GM12878 (cell line): ENCODE measurements at regions of chr9 and their contacts with region 1.

Region 1: DNA sequence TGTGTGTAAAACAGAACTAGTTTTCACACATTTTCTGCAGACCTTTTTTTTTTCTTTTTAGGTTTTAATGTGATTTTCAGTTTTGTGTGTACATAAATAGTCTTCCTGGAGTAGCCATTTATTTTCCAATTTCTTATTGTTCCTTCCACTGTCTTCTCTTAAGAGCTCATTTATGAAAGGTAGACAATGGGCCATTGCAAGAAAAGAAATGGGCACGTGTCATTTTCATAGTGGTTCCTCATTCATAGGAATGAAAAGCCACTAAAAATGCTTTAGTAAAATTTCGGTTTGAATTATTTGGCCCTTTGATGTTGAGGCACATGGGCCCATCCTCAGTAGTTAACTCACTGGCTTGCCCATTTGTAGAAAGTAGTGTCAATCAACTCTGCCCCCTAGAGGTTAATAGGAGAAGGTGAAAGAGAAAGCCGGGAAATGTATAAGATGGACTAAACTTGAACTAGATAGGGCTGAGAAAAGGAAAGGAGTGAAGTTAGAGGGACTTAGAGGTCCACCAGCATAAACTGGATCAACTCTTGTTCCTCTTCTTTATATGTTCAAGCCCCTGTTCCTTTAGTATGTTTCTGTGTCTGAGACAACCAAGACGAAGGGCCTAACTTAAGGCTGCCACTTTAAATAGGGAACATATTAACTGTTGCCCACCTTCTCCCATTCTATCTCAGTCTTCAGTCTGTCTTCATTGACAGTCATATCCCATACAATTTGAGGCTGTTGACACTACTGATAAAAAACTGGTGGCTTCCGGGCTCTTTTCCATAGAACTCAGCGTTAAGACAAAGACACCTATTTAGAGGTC is 72.6 kb downstream of the SMARCA2 start:
- DNase-seq: peak; percentile 45
- ATAC-seq: peak; percentile 91
- H3K4me3 ChIP-seq: no peak overlapping the region
- H3K27ac ChIP-seq: peak overlapping the region; percentile 38
- H3K4me1 ChIP-seq: peaks cover 4% of the 10 kb centered on the region; the same call in 1 of the 2 replicates
- H3K27me3 ChIP-seq: no peaks in the 10 kb centered on the region
- CTCF ChIP-seq: peak; percentile 60 to 68 (median 65)
- EP300 ChIP-seq: no peak
- POLR2A ChIP-seq: no peak
- RAD21 ChIP-seq: peak; percentile 68

Region 2: DNA sequence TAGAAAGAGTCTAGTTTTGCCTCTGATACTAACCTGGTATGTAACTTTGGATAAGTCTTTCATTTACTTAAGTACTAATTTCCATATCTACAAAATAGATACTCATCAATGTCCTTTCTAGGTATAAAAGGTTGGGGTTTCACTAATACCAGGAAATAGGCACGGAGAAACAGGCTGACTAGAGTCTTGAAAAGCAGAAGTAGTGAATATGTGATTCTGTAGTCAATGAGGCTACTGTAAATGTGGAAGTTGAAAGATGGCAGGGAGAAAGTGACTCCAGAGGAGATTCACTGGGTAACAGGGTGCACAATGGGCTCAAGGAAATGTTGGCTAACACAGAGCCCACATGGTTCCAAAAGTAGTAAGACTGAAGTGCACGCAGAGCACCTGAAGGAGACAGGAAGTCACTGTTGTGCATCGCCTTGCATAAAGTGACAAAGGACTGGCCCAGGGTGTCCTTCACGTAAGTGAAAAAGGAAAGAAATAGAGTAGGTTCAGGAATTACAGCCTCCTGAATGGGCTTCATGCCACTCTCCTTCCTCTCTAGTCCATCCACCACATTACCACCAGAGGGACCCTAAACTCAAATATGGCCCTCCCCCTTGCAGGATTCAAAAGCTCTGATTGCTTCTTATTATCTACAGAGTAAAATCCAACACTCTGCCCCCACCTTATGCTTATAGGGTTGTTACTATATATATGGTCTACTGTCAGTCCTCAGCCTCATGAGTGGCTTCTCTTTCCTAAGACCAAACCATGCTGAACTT is 360.5 kb before region 1 on chr9:
- CTCF ChIA-PET with region 1: interaction called, 3 read pairs
- POLR2A ChIA-PET with region 1: no interaction called
- RAD21 ChIA-PET with region 1: interaction called, 5 read pairs
- SMC1A ChIA-PET with region 1: no interaction called
- in situ Hi-C with region 1: no loop called
- intact Hi-C with region 1: loop called (anchors 5 kb)
- DNase-seq: no peak
- ATAC-seq: peak; percentile 87
- H3K4me3 ChIP-seq: no peak overlapping the region
- H3K27ac ChIP-seq: no peak overlapping the region
- H3K4me1 ChIP-seq: peaks cover 6% of the 10 kb centered on the region; the same call in 1 of the 2 replicates
- H3K27me3 ChIP-seq: no peaks in the 10 kb centered on the region
- CTCF ChIP-seq: peak; percentile 26 to 45 (median 38); a peak in 5 of 6 replicates
- EP300 ChIP-seq: no peak
- POLR2A ChIP-seq: no peak
- RAD21 ChIP-seq: peak; percentile 62

Region 3: DNA sequence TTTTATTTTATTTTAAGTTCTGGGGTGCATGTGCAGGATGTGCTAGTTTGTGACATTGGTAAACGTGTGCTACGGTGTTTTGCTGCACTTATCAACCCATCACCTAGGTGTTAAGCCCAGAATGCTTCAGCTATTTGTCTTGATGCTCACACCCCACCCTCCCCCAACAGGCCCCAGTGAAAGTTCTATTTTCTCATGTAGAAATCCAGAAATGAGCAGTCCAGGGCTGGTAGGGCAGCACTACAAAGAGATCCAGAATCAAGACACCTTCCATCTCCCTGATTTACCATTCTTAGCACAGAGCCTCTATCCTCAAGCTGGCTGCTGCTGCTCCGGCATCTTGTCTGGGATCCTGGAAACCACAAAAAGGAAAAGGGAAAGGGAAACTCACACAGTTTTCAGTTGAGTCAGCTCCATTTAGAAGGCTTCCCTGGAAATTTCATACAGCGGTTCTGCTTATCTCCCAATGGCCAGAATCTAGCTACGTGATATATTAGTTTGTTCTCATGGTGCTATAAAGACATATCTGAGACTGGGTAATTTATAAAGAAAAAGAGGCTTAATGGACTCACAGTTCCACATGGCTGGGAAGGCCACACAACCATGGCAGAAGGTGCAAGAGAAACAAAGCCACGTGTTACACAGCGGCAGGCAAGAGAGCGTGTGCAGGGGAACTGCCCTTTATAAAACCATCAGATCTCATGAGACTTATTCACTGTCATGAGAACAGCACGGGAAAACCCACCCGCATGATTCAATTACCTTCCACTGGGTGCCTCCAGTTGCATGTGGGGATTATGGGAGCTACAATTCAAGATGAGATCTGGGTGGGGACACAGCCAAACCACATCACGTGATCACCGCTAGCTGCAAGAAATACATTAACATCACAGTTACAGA is 157.7 kb before region 1 on chr9:
- CTCF ChIA-PET with region 1: interaction called, 8 read pairs
- POLR2A ChIA-PET with region 1: no interaction called
- RAD21 ChIA-PET with region 1: interaction called, 5 read pairs
- SMC1A ChIA-PET with region 1: interaction called, 3 read pairs
- in situ Hi-C with region 1: no loop called
- intact Hi-C with region 1: loop called (anchors 10 kb)
- DNase-seq: peak; percentile 84
- ATAC-seq: peak; percentile 87
- H3K4me3 ChIP-seq: peak overlapping the region; percentile 58
- H3K27ac ChIP-seq: peak overlapping the region; percentile 88
- H3K4me1 ChIP-seq: peaks cover 24% of the 10 kb centered on the region
- H3K27me3 ChIP-seq: no peaks in the 10 kb centered on the region
- CTCF ChIP-seq: 0 out of 6 replicates have a peak, but pooled peaks of 1 of the 3 experiments have one; percentile 6
- EP300 ChIP-seq: peak; percentile 39 to 73; a peak in 1 of 4 replicates
- POLR2A ChIP-seq: no peak
- RAD21 ChIP-seq: peak; percentile 44

Region 4: GRCh38 chr9:2008372-2008771 is 79.3 kb before region 1 on chr9:
- CTCF ChIA-PET with region 1: interaction called, 11 read pairs
- POLR2A ChIA-PET with region 1: no interaction called
- RAD21 ChIA-PET with region 1: interaction called, 3 read pairs
- SMC1A ChIA-PET with region 1: interaction called, 3 read pairs
- in situ Hi-C with region 1: no loop called
- intact Hi-C with region 1: no loop called
- DNase-seq: no peak
- ATAC-seq: no peak
- H3K4me3 ChIP-seq: no peak overlapping the region
- H3K27ac ChIP-seq: no peak overlapping the region
- H3K4me1 ChIP-seq: peaks cover 13% of the 10 kb centered on the region; the same call in 1 of the 2 replicates
- H3K27me3 ChIP-seq: no peaks in the 10 kb centered on the region
- CTCF ChIP-seq: no peak
- EP300 ChIP-seq: no peak
- POLR2A ChIP-seq: no peak
- RAD21 ChIP-seq: no peak

Region 5: DNA sequence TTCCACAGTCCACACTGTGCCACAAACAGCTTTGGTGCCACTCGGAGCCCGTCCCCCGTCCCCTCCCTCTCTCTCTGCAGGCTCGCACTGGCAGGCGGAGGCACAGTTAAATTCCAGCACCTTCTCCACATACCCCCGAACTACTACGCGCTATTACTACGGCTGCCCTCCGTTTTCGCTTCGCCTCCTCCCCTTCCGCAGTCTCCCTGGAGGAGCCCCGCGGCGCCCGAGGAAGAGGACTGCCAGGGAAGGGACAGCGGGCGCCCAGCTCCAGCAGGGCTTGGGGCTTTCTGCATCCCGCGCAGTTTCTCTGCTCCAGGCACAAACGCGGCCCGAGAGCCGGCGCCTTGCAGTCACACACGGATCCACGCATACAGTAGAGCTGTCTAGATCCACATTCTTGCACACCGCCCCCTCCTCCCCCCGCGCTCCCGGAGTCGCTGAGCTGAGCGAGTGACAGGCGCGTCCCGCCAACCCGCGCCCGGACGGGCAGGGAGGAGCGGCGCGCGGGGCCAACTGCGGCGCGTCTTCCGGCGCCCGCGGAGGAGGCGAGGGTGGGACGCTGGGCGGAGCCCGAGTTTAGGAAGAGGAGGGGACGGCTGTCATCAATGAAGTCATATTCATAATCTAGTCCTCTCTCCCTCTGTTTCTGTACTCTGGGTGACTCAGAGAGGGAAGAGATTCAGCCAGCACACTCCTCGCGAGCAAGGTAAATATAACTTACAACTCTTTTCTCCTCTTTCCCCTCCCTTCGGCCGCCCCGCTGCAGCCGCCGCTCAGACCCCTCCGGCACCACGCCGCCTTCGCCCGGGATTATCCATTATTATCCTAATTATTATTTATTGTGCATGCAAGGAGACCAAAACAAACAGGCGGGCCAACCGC is 72.8 kb before region 1 on chr9 and contains the start of gene SMARCA2:
- CTCF ChIA-PET with region 1: interaction called, 8 read pairs
- POLR2A ChIA-PET with region 1: interaction called, 3 read pairs
- RAD21 ChIA-PET with region 1: interaction called, 4 read pairs
- SMC1A ChIA-PET with region 1: interaction called, 4 read pairs
- in situ Hi-C with region 1: no loop called
- intact Hi-C with region 1: loop called (anchors 2 kb)
- DNase-seq: peak; percentile 86
- ATAC-seq: peak; percentile 81
- H3K4me3 ChIP-seq: peak within 1 kb of the TSS; percentile 95
- H3K27ac ChIP-seq: peak within 1 kb of the TSS; percentile 91
- H3K4me1 ChIP-seq: peaks cover 17% of the 10 kb centered on the region; the same call in 1 of the 2 replicates
- H3K27me3 ChIP-seq: no peaks in the 10 kb centered on the region
- CTCF ChIP-seq: no peak
- EP300 ChIP-seq: 0 out of 4 replicates have a peak, but pooled peaks of 1 of the 2 experiments have one; percentile 16
- POLR2A ChIP-seq: peak; percentile 98
- RAD21 ChIP-seq: no peak
- polyA plus RNA-seq, gene SMARCA2: 100 to 130 TPM

Region 6: GRCh38 chr9:2023532-2023931 is 64.2 kb before region 1 on chr9:
- CTCF ChIA-PET with region 1: interaction called, 10 read pairs
- POLR2A ChIA-PET with region 1: interaction called, 5 read pairs
- RAD21 ChIA-PET with region 1: interaction called, 6 read pairs
- SMC1A ChIA-PET with region 1: interaction called, 6 read pairs
- in situ Hi-C with region 1: no loop called
- intact Hi-C with region 1: no loop called
- DNase-seq: no peak
- ATAC-seq: peak; percentile 30
- H3K4me3 ChIP-seq: peak overlapping the region; percentile 39
- H3K27ac ChIP-seq: peak overlapping the region; percentile 56
- H3K4me1 ChIP-seq: peaks cover 50% of the 10 kb centered on the region
- H3K27me3 ChIP-seq: no peaks in the 10 kb centered on the region
- CTCF ChIP-seq: no peak
- EP300 ChIP-seq: no peak
- POLR2A ChIP-seq: no peak
- RAD21 ChIP-seq: no peak

Region 7: DNA sequence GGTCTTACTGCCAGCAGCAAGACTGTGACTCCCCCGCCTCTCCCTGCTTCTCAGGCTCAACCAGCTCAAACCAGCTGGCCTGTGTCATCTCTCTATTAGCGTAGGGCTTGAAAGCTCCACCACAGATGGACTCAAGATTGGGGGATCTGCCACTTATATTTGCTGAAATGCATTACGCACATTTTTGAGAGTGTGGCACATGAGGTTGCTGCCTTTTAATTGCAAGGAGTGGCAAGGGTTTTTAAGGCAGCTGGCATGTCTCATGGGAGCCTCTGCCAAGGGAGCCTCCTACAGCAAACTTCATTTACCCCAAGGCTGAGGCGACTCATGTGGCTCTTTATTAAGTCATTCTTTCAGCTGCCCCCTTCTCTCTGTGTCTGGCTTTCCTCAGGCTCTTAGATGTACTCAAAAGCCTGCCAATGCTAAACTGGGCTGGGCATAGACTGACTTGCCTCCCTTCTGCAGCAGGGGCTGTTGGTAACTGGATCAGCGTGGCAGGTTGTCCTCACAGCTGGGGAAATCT is 146.7 kb after region 1 on chr9:
- CTCF ChIA-PET with region 1: no interaction called
- POLR2A ChIA-PET with region 1: no interaction called
- RAD21 ChIA-PET with region 1: no interaction called
- SMC1A ChIA-PET with region 1: no interaction called
- in situ Hi-C with region 1: no loop called
- intact Hi-C with region 1: no loop called
- DNase-seq: no peak
- ATAC-seq: no peak
- H3K4me3 ChIP-seq: no peak overlapping the region
- H3K27ac ChIP-seq: no peak overlapping the region
- H3K4me1 ChIP-seq: peaks cover 8% of the 10 kb centered on the region
- H3K27me3 ChIP-seq: no peaks in the 10 kb centered on the region; a peak in 1 of 4 replicates
- CTCF ChIP-seq: no peak
- EP300 ChIP-seq: no peak
- POLR2A ChIP-seq: no peak
- RAD21 ChIP-seq: no peak